Right lobe of liver (tissue), 6 donors: ENCODE measurements at regions of chr15 and their contacts with region 1.

Region 1: DNA sequence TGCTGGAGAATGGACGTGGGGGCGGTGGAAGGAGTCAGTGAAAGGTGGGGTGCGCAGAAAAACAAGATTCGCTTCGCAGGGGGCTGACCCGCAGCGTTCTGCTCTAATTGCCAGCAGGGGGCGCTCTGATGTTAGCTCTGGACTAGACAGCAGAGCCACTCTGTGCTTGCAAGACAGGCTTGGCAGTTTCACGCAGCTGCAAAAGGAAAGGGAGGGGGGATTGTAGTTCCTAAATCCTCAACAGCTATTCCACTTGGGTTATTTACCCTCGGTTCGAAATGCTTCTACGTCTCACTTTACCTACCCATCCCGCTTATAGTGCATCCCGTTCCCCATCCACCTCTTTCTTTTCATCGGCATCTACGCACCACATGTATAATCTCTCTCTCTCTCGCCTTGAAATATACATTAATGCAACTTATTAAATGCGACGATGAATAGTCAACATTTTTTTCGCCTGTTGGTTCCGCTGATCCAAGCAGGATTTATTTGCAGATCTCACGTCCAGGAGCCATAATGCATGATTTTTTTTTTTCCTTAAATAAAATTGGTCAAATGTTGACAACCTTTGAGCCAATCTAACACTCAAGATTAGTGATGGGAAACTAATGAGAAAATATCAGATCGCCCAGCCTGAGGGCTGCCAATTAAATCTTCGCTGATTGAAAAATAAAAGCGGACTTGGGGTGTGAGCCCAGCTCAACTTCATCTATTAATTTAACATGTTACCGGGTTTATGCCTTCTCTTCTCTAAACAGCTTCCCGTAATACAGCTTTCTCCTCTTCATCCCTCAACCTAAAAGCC is 216.4 kb downstream of the MEIS2 start:
- DNase-seq: peak; percentile 89 to 91 (median 90)
- ATAC-seq: peak; percentile 88 to 93 (median 88)
- H3K4me3 ChIP-seq: peak overlapping the region; percentile 9 to 24 (median 17)
- H3K27ac ChIP-seq: no peak overlapping the region
- H3K4me1 ChIP-seq: peaks cover 0 to 24% (median 0%) of the 10 kb centered on the region in 4 donors
- H3K27me3 ChIP-seq: peaks cover 0 to 40% of the 10 kb centered on the region in 2 donors
- CTCF ChIP-seq: peak; percentile 80 to 85 (median 82)
- POLR2A ChIP-seq: no peak

Region 2: DNA sequence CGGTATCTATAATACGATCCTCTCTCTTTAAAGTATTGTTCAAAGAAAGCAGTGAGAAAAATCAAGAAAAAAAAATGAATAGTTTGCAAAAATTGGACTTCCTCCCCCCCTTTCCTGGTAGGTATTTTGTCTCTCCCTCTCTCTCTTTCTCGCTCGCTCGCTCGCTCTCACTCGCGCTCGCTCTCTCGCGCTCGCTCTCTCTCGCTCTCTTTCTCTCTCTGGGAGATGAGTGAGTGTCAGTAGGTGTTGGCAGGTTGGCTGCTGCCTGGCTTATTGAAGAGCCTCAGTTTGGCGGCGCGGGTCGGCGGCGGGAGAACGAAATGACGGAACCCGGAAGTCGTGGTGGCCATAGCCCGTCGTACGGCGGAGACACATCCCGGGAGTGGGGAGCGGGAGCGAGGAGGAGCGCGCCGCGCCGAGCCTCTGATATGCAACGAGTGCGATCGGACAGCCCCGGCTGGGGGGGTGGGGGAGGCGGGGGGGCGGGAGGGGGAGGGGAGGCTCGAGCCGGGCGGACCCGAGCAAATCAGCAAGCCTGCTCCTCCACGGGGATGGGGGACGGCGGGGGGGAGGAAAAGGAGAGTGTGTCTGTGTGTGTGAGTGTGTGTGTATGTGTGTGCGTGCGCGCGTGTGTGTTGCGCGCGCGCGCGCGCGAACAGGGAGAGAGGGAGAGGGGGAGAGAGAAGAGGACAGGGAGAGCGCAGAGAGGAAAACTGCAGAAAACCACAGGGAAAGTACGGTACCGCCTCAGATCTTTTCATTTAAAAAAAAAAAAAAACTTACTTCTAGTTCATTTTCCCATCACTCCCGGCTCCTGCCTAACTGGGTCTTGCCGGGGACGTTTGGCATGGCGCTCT is 216.4 kb after region 1 on chr15 and contains the start of gene MEIS2:
- intact Hi-C with region 1: loop called in 1 of 2 experiments (anchors 10 kb)
- DNase-seq: peak; percentile 93
- ATAC-seq: peak; percentile 70 to 80 (median 76)
- H3K4me3 ChIP-seq: peak within 1 kb of the TSS; percentile 51 to 72 (median 71)
- H3K27ac ChIP-seq: peak within 1 kb of the TSS; percentile 93 to 96 (median 96)
- H3K4me1 ChIP-seq: no peaks in the 10 kb centered on the region
- H3K27me3 ChIP-seq: peaks cover 0 to 9% of the 10 kb centered on the region in 2 donors
- CTCF ChIP-seq: no peak
- POLR2A ChIP-seq: peak; percentile 79
- total RNA-seq, gene MEIS2: 6.1 to 18.0 (median 7.9) TPM

Region 3: DNA sequence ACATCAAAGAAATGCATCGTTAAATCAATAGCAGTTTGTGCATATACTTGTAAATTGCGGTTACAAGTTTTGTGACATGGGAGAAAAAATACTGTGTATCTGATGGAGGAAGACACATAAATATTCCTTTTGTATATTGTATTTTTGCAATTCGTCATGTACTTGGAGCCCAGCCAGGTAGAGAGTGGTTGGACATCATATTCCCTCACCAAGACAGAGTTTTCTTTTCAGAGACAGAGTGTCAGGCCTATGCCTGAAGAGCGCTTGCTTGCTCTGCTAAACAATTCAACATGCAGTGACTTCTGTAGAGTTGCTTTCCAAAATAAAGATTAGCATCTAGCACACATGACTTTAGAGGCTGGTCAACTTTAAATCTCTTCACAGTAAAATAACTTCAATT is 241.2 kb after region 1 on chr15:
- intact Hi-C with region 1: loop called in 1 of 2 experiments (anchors 10 kb)
- DNase-seq: no peak
- ATAC-seq: no peak
- H3K4me3 ChIP-seq: no peak overlapping the region
- H3K27ac ChIP-seq: no peak overlapping the region
- H3K4me1 ChIP-seq: no peaks in the 10 kb centered on the region
- H3K27me3 ChIP-seq: peaks cover 0 to 5% of the 10 kb centered on the region in 2 donors
- CTCF ChIP-seq: no peak
- POLR2A ChIP-seq: no peak